Mammary epithelial cell (primary cell): ENCODE measurements at regions of chr2 and their contacts with region 1.

Region 1: DNA sequence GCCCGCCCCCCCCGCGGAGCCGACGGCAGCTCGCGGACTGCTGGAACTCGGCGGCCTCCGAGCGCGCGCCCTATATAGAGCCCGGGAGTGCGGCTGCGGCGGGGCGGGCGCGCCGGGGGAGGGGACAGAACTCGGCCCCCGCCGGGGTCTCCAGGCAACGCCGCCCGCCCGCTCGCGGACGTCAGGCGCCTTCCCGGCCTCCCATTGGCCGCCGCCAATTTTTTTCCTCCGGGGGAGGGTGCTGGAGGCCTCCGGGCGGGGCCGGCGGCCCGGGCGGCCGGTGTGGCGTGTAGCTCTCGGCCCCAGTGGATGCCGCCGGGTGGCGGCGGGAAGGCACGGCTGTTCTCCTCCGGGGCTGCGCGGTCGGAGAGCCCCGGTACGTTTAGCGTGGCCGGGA is at the start of gene ZFP36L2:
- DNase-seq: peak; percentile 95
- H3K4me3 ChIP-seq: peak within 1 kb of the TSS; percentile 83 to 88 (median 86)
- H3K27ac ChIP-seq: peak within 1 kb of the TSS; percentile 88
- H3K4me1 ChIP-seq: peaks cover 29% of the 10 kb centered on the region
- H3K27me3 ChIP-seq: no peaks in the 10 kb centered on the region
- CTCF ChIP-seq: no peak
- total RNA-seq, gene ZFP36L2: 26.3 to 213 TPM

Region 2: DNA sequence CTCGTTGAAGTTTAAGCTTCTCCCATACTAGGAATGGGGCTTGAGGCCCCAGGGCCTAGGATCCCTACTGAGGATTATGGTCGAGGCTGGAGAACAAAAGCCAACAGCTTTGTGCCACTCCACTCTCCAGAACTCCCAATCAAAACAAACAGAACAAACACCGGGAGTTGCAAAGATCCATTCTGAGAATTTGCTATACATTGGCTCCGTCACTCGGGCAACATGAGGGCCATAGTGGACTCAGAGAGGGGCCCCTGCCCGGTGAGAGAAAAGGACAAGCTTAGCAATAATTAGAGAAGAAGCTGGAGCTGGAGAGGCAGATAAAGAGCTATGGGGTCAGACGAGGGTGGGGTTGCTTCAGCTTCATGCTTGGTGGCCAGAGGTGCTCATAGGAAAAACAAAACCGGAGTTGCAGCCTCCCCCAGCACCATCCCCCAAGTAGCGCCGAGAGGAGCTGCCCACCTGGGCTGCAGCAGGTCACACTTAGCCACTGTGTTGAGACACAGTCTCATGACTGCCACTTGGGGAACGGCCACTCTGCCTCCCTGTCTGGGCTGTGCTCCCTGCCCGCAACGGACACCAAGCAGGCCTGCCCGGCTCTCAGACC is 291.9 kb before region 1 on chr2:
- CTCF ChIA-PET with region 1: no interaction called
- dilution Hi-C with region 1: no loop called
- in situ Hi-C with region 1: no loop called
- intact Hi-C with region 1: no loop called
- DNase-seq: no peak
- H3K4me3 ChIP-seq: no peak overlapping the region
- H3K27ac ChIP-seq: no peak overlapping the region
- H3K4me1 ChIP-seq: peaks cover 45% of the 10 kb centered on the region
- H3K27me3 ChIP-seq: no peaks in the 10 kb centered on the region
- CTCF ChIP-seq: no peak

Region 3: GRCh38 chr2:42964439-42965083 is 262.0 kb before region 1 on chr2:
- CTCF ChIA-PET with region 1: no interaction called
- dilution Hi-C with region 1: no loop called
- in situ Hi-C with region 1: loop called in 1 of 2 experiments (anchors 5 kb)
- intact Hi-C with region 1: no loop called
- DNase-seq: peak; percentile 85
- H3K4me3 ChIP-seq: no peak overlapping the region
- H3K27ac ChIP-seq: peak overlapping the region; percentile 25
- H3K4me1 ChIP-seq: peaks cover 16% of the 10 kb centered on the region
- H3K27me3 ChIP-seq: no peaks in the 10 kb centered on the region
- CTCF ChIP-seq: no peak

Region 4: DNA sequence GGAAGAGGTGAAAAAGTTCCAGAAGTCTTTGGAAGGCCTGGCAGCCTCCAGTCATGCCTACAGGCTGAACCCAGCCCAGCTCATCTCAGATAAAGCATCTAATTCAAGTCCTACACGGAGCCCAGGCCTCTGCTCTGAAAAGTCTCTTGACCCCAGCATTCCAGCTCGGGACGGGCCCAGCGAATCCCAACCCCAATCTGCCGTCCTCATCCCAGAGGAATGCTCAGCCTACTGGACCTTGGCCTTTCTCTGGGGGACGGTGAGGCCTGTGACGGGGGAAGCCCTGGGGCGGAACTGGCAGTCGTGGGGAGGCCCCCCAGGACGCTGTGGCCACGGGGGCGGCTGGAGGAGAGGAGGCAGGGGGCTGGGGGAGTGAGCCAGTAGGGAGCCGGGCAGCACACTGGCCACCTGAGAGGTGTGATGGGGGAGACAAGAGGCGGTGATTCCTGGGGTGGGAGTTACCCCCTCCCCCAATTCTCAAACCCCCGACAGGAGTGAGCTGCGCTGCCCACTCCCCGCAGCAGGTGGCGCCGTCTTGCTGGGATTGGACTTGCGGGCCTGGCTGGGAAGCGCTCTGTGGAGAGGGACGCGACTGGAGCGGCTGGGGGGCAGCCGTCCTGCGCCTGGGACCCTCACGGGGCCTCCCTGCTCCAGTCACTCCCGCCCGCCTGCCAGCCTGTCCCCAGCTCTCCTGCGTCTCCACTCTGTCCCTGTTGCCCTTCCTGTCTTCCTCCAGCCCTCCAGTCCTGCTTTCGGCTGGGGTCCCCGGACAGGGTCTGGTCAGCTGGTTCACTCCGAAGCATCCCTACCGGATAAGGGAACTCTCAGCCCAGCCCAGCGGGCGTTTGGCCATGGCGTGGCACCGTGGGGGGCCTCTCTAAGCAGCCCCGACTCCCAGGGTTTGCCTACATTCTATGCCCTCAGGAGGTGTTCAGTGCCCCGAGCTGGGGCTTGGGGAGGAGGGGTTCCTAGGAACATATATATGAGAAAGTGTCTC is 251.5 kb before region 1 on chr2:
- CTCF ChIA-PET with region 1: no interaction called
- dilution Hi-C with region 1: loop called (anchors 5 kb)
- in situ Hi-C with region 1: loop called in 1 of 2 experiments (anchors 10 kb)
- intact Hi-C with region 1: loop called (anchors 1 kb)
- DNase-seq: no peak
- H3K4me3 ChIP-seq: no peak overlapping the region
- H3K27ac ChIP-seq: peak overlapping the region; percentile 11
- H3K4me1 ChIP-seq: peaks cover 46% of the 10 kb centered on the region
- H3K27me3 ChIP-seq: no peaks in the 10 kb centered on the region
- CTCF ChIP-seq: peak; percentile 80 to 92

Region 5: GRCh38 chr2:43097644-43098408 is 128.7 kb before region 1 on chr2:
- CTCF ChIA-PET with region 1: no interaction called
- dilution Hi-C with region 1: no loop called
- in situ Hi-C with region 1: no loop called
- intact Hi-C with region 1: no loop called
- DNase-seq: no peak
- H3K4me3 ChIP-seq: no peak overlapping the region
- H3K27ac ChIP-seq: no peak overlapping the region
- H3K4me1 ChIP-seq: peaks cover 24% of the 10 kb centered on the region
- H3K27me3 ChIP-seq: no peaks in the 10 kb centered on the region
- CTCF ChIP-seq: no peak

Region 6: GRCh38 chr2:43158259-43158880 is 68.2 kb before region 1 on chr2:
- CTCF ChIA-PET with region 1: no interaction called
- dilution Hi-C with region 1: no loop called
- in situ Hi-C with region 1: loop called in 1 of 2 experiments (anchors 10 kb)
- intact Hi-C with region 1: loop called (anchors 1 kb)
- DNase-seq: peak; percentile 94
- H3K4me3 ChIP-seq: no peak overlapping the region
- H3K27ac ChIP-seq: peak overlapping the region; percentile 93
- H3K4me1 ChIP-seq: peaks cover 52% of the 10 kb centered on the region
- H3K27me3 ChIP-seq: no peaks in the 10 kb centered on the region
- CTCF ChIP-seq: no peak

Region 7: DNA sequence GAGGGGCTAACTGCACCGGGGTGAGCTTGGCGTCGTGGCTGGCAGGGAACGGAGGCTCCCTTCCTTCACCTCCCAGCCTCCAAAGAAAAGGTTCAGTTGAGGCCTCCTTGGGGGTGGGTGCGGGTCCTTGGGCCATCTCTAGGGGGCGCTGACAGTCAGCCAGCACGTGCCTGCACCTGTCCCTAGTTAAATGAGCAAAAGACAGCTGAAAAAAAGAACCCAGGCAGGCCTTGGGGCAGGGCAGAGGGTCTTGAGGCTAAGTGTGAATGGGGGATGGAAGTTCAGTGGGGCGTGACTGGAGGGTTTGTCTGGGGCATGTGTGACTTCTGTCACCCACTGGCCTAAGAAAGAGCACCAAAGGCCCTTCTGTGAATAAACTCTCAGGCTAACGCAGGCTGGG is 56.6 kb before region 1 on chr2:
- CTCF ChIA-PET with region 1: interaction called, 19 read pairs
- dilution Hi-C with region 1: no loop called
- in situ Hi-C with region 1: no loop called
- intact Hi-C with region 1: loop called (anchors 2 kb)
- DNase-seq: no peak
- H3K4me3 ChIP-seq: no peak overlapping the region
- H3K27ac ChIP-seq: no peak overlapping the region
- H3K4me1 ChIP-seq: peaks cover 20% of the 10 kb centered on the region
- H3K27me3 ChIP-seq: no peaks in the 10 kb centered on the region
- CTCF ChIP-seq: peak; percentile 56 to 70

Region 8: DNA sequence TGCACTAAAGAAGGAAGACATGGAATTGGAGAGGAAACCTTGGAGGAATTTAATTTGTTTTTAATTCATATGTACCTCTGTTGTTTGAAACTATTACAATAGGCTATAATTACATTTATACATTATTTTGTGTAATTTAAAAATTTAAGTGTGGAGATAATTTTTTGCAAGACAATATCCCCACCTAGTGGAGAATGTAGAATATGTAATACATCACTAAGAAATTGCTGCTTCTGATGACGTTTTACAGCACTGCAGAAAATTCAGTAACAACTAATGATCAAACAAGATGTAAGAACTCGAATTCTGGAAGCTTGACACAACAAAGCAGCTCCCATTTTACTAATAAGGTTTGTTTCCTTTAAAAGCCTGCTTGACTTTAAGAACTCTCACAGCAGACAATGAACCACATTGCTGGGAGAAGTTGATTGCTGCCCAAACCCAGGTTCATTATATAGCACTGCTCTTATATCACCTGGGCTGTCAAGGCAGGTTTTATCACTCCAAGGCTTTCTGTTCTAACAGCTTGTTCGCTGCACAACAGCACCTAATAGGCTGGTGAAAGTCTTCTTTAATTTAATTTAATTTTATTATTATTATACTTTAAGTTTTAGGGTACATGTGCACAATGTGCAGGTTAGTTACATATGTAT is 315.9 kb after region 1 on chr2:
- CTCF ChIA-PET with region 1: interaction called, 5 read pairs
- dilution Hi-C with region 1: no loop called
- in situ Hi-C with region 1: no loop called
- intact Hi-C with region 1: loop called (anchors 1 kb)
- DNase-seq: peak; percentile 23
- H3K4me3 ChIP-seq: no peak overlapping the region
- H3K27ac ChIP-seq: no peak overlapping the region
- H3K4me1 ChIP-seq: peaks cover 30% of the 10 kb centered on the region
- H3K27me3 ChIP-seq: no peaks in the 10 kb centered on the region
- CTCF ChIP-seq: peak; percentile 40

Region 9: DNA sequence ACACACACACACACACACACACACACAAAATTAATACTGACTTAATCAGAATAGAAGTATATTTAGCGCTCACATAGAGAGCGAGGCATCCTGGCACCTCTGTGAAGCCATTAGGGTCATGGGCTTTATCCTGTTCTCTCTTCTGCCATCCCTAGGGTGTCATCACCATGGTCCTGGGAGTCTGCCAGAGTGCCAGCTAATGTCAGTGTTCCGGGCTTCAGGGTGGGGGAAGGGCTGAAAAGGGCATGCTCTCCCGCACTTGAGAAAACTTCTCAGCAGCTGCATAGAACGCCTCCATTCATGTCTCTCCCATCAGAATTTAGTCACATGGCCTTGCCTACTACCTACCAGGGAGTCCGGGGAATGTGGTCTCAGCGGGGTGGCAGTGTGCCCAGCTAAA is 527.6 kb after region 1 on chr2:
- CTCF ChIA-PET with region 1: no interaction called
- dilution Hi-C with region 1: no loop called
- in situ Hi-C with region 1: no loop called
- intact Hi-C with region 1: no loop called
- DNase-seq: no peak
- H3K4me3 ChIP-seq: no peak overlapping the region
- H3K27ac ChIP-seq: no peak overlapping the region
- H3K4me1 ChIP-seq: peaks cover 13% of the 10 kb centered on the region
- H3K27me3 ChIP-seq: no peaks in the 10 kb centered on the region
- CTCF ChIP-seq: no peak